ENCODE measurements at regions of chr20 and their contacts with region 1.

Region 1: GRCh38 chr20:19212821-19213502 is 520 bp downstream of the SLC24A3 start:
- DNase-seq: peak; percentile 50 to 64
- ATAC-seq: peak; percentile 84 to 90
- H3K4me3 ChIP-seq: peak overlapping the region; percentile 55 to 66 (median 62)
- H3K27ac ChIP-seq: peak overlapping the region; percentile 30 to 73 (median 59)
- H3K4me1 ChIP-seq: peaks cover 6 to 21% of the 10 kb centered on the region in 2 donors
- H3K27me3 ChIP-seq: no peaks in the 10 kb centered on the region
- CTCF ChIP-seq: peak; percentile 23 to 65 (median 48)
- POLR2A ChIP-seq: no peak

Region 2: DNA sequence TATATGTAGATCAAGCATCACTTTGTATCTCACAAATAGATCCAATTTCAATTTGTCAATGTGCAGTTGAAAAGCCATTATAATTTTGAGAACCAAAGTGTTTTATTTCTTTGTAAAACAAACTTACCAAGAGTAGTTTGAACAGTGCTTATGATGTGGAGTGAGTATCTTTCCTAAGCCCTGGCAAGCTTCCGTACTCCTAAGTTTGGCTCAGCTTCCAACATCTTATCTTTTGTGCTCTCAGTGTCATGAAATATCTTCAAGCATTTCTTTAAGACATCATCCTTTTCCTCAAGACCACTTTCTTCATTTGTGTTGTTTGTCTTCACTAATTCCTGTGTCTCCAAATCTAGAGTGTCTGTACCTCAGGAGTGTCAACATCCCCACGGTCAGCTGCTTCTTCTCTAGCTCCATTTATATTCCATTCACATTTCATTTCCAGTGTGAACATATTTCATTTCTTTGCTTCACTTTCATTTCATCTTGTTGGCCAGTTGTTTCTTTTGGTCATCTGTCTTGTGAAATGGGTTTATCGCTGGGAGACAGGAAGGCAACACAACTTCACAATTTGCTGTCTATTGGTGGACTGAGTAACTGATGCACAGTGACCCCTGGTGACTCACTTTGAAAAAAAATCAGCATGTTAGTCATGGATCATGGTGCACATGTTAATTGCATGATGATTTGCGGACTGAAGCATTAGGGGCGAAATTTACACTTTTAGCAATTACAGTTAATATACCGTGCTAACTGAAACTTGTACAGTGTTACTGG is 36.3 kb after region 1 on chr20:
- in situ Hi-C with region 1: no loop called
- intact Hi-C with region 1: loop called (anchors 5 kb)
- DNase-seq: no peak
- ATAC-seq: no peak
- H3K4me3 ChIP-seq: no peak overlapping the region
- H3K27ac ChIP-seq: no peak overlapping the region
- H3K4me1 ChIP-seq: peaks cover 3 to 5% of the 10 kb centered on the region in 2 donors
- H3K27me3 ChIP-seq: no peaks in the 10 kb centered on the region
- CTCF ChIP-seq: no peak
- POLR2A ChIP-seq: no peak

Region 3: GRCh38 chr20:19347943-19348456 is 135.0 kb after region 1 on chr20:
- in situ Hi-C with region 1: no loop called
- intact Hi-C with region 1: no loop called
- DNase-seq: peak; percentile 15 to 21
- ATAC-seq: peak; percentile 75 to 86
- H3K4me3 ChIP-seq: peak overlapping the region; percentile 34 to 45 (median 36)
- H3K27ac ChIP-seq: peak overlapping the region; percentile 55 to 73 (median 66)
- H3K4me1 ChIP-seq: peaks cover 14 to 31% of the 10 kb centered on the region in 2 donors
- H3K27me3 ChIP-seq: no peaks in the 10 kb centered on the region
- CTCF ChIP-seq: no peak
- POLR2A ChIP-seq: no peak

Region 4: DNA sequence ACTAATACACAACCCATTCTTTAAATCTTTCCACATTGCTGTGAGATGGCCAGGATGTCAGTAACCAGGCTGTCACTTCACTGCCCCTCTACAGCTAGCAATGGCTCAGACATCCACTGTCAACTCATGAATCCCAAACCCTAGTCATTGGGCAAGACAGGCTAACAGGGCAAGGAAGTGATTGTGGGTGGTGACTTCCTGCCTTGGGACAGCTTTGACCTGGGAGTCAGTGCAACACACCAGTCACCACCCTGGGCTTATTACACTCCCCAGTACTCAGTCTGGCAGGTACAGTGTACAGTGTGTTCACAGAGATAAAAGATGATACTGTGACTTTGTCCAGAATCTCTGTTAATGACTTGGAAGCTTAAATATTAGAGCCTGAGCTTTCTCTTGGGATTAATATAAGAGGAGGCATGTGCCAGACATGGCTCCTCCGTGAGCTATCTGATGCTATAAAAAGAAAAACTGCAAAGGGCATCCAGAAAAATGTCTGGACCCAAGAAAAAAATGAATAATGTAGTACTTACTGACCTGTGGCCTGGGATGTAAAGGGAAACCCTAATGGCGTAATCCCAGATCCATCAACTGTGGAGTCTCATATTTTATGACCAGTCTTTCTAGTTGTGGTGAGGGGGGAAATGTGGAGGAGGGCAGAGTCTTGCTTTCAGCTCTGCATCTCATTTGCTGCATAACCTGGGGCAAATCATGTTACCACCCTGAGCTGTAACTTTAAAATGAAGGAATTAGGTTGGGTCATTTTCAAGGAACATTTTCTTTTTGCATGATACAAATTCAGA is 243.8 kb after region 1 on chr20:
- in situ Hi-C with region 1: no loop called
- intact Hi-C with region 1: loop called (anchors 1 kb)
- DNase-seq: peak in 1 of 2 donors; percentile 58
- ATAC-seq: peak in 1 of 2 donors; percentile 78
- H3K4me3 ChIP-seq: no peak overlapping the region
- H3K27ac ChIP-seq: peak overlapping the region; percentile 32 to 74 (median 56)
- H3K4me1 ChIP-seq: peaks cover 37 to 51% of the 10 kb centered on the region in 2 donors
- H3K27me3 ChIP-seq: no peaks in the 10 kb centered on the region
- CTCF ChIP-seq: no peak
- POLR2A ChIP-seq: no peak

Region 5: GRCh38 chr20:19566226-19566965 is 353.4 kb after region 1 on chr20:
- in situ Hi-C with region 1: no loop called
- intact Hi-C with region 1: no loop called
- DNase-seq: no peak
- ATAC-seq: no peak
- H3K4me3 ChIP-seq: no peak overlapping the region
- H3K27ac ChIP-seq: no peak overlapping the region
- H3K4me1 ChIP-seq: no peaks in the 10 kb centered on the region
- H3K27me3 ChIP-seq: no peaks in the 10 kb centered on the region
- CTCF ChIP-seq: no peak
- POLR2A ChIP-seq: no peak